PC-9 (cell line): ENCODE measurements at regions of chr13 and their contacts with region 1.

Region 1: GRCh38 chr13:113410472-113411201 is 42.7 kb downstream of the ADPRHL1 start:
- DNase-seq: peak; percentile 71 to 95
- H3K4me3 ChIP-seq: peak overlapping the region; percentile 54
- H3K27ac ChIP-seq: peak overlapping the region; percentile 83
- H3K4me1 ChIP-seq: peaks cover 21% of the 10 kb centered on the region
- H3K27me3 ChIP-seq: peaks cover 29% of the 10 kb centered on the region
- CTCF ChIP-seq: no peak

Region 2: DNA sequence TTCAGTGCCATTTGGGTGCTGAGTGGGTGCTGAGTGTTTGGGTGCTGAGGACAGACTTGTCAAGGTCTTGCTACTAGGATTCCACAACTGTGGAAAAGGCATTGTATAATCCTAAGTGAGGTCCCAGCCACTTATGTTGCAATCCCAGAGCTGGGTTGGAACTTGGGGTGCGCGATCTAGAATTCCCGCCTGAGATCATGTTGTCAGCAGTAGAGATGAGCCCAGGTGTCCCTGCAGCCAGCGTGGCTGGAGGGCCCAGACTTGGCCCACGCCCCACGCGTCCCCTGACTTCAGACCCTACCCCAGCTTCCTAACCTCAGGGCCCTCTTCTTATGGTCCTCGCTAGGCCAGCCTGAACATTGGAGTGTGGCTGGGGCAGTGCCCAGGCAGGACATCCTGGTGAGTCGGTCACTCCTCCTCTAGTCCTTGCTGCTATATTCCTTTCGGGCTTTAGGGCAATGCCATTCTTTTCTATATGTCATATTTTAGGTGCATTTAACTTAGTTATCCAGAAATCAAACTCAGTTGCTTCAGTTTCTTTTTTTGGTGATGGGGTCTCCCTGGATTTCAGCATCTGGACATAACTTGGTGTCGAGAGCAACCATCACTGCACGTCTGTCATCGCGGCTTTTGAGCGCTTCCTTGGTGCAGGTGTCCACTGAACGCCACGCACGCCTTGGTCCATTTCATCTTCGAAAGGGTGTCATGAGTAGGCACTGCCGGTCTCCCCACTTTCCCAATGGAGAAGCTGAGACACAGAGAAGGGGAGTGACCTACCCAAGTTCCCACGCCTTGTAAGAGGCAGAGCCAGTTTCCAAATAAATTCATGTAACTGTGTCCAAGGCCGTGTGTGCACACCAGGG is 351.4 kb before region 1 on chr13:
- CTCF ChIA-PET with region 1: no interaction called
- POLR2A ChIA-PET with region 1: interaction called, 12 read pairs
- intact Hi-C with region 1: no loop called
- DNase-seq: no peak
- H3K4me3 ChIP-seq: no peak overlapping the region
- H3K27ac ChIP-seq: no peak overlapping the region
- H3K4me1 ChIP-seq: peaks cover 18% of the 10 kb centered on the region
- H3K27me3 ChIP-seq: no peaks in the 10 kb centered on the region
- CTCF ChIP-seq: no peak